Left ventricle myocardium inferior (tissue), 1 donor: ENCODE measurements at regions of chr19 and their contacts with region 1.

Region 1: DNA sequence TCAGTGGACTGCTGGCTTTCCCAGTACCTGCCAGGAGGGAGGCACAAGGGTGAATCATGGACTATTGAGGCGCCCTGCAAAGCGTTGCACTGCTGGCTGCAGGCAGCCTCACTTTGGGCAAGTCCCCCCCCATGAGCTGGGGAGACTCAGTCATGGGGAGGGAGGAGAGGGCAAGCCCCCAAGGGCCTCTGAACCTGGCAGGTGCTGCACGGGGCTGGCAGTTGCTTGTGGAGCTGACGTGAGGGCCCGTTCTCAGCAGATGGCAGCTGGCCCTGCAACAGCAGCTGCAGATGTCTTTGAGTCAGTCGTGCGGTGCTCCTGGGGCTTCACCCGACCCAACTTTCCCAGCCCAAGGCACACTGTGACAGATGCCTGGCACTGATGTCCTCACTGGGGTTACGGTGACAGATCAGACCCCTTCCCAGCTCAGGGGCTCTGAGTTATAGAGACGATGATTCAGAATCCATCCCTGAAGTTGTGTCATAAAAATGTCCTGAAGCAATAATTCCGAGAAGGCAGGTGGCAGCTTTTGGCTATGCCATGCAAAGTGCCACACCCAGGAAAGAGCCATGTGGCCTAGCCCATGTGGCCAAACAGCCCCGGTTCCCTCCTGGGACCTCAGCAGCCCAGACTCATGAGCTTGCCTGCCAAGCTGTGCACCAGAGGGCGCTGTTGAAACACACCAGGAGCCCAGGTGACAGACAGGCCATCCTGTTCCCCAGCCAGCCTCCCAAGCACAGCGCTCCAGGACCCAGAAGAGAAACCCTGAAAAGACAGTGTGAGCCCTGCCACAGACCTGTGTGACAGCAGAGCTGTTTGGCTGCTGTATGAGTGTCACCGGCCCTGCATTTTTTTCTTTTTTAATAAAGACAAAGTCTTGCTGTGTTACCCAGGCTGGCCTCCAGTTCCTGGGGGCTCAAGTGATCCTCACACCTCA is 53.6 kb upstream of the LDLR start:
- DNase-seq: peak; percentile 89
- H3K4me3 ChIP-seq: no peak overlapping the region
- H3K27ac ChIP-seq: peak overlapping the region; percentile 38
- H3K4me1 ChIP-seq: peaks cover 11% of the 10 kb centered on the region
- H3K27me3 ChIP-seq: no peaks in the 10 kb centered on the region
- CTCF ChIP-seq: peak; percentile 93

Region 2: DNA sequence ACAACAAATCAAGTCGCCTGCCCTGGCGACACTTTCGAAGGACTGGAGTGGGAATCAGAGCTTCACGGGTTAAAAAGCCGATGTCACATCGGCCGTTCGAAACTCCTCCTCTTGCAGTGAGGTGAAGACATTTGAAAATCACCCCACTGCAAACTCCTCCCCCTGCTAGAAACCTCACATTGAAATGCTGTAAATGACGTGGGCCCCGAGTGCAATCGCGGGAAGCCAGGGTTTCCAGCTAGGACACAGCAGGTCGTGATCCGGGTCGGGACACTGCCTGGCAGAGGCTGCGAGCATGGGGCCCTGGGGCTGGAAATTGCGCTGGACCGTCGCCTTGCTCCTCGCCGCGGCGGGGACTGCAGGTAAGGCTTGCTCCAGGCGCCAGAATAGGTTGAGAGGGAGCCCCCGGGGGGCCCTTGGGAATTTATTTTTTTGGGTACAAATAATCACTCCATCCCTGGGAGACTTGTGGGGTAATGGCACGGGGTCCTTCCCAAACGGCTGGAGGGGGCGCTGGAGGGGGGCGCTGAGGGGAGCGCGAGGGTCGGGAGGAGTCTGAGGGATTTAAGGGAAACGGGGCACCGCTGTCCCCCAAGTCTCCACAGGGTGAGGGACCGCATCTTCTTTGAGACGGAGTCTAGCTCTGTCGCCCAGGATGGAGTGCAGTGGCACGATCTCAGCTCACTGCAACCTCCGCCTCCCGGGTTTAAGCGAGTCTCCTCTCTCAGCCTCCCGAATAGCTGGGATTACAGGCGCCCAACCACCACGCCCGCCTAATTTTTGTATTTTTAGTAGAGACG is 53.7 kb after region 1 on chr19 and contains the start of gene LDLR:
- intact Hi-C with region 1: loop called (anchors 10 kb)
- DNase-seq: peak; percentile 76
- H3K4me3 ChIP-seq: peak within 1 kb of the TSS; percentile 74
- H3K27ac ChIP-seq: peak within 1 kb of the TSS; percentile 95
- H3K4me1 ChIP-seq: peaks cover 81% of the 10 kb centered on the region
- H3K27me3 ChIP-seq: no peaks in the 10 kb centered on the region
- CTCF ChIP-seq: no peak
- total RNA-seq, gene LDLR: 8.2 TPM

Region 3: DNA sequence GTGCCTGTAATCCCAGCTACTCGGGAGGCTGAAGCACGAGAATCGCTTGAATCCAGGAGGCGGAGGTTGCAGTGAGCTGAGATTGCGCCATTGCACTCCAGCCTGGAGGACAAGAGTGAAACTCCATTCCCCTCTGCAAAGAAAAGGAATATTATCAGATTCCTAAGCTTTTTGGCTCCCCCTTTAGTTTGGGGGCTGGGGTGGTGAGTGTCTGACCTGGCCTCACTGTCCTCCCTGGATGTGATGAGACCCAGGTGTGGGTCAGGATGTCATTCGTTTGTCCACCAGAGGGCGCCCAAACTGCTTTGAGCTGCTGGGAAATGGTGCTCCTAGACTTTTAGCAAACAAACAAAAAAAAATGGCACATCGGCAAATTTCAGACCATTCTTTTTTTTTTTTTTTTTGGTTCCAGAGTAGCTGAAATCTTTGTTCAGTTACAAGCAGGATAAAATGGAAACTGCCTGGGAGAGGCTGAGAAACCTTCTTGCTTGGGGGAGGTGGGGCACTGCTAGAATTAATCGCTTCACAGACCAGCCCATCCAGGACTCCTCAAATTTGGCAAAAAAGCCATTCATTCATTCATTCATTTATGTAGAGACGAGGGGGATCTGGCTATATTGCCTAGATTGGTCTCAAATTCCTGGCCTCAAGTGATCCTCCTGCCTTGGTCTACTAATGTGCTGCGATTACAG is 90.4 kb after region 1 on chr19:
- intact Hi-C with region 1: loop called (anchors 10 kb)
- DNase-seq: peak; percentile 80
- H3K4me3 ChIP-seq: no peak overlapping the region
- H3K27ac ChIP-seq: no peak overlapping the region
- H3K4me1 ChIP-seq: peaks cover 17% of the 10 kb centered on the region
- H3K27me3 ChIP-seq: no peaks in the 10 kb centered on the region
- CTCF ChIP-seq: peak; percentile 87